ENCODE measurements at regions of chr5 and their contacts with region 1.

Region 1: GRCh38 chr5:121819682-121820261 is 31.9 kb upstream of the FTMT start:
- DNase-seq: no peak
- ATAC-seq: peak in 3 of 4 donors; percentile 7 to 24 (median 15)
- H3K4me3 ChIP-seq: no peak overlapping the region
- H3K27ac ChIP-seq: no peak overlapping the region
- H3K4me1 ChIP-seq: peaks cover 0 to 5% (median 0%) of the 10 kb centered on the region in 12 donors
- H3K27me3 ChIP-seq: no peaks in the 10 kb centered on the region
- CTCF ChIP-seq: no peak
- POLR2A ChIP-seq: no peak

Region 2: DNA sequence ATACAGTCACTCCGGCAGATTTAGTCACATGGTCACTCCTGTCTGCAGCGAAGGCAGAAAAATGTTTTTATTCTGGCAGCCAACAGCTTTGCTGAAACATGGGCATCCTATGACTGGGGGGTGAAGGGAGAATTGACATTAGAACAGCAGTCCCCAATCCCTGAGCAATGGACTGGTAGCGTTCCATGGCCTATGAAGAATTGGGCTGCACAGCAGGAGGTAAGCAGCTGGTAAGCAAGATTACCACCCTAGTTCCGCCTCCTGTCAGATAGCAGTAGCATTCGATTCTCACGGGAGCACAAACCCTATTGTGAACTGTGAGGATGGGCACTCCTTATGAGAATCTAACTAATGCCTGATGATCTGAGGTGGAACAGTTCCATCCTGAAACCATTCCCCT is 61.2 kb before region 1 on chr5:
- intact Hi-C with region 1: no loop called
- DNase-seq: no peak
- ATAC-seq: no peak
- H3K4me3 ChIP-seq: no peak overlapping the region
- H3K27ac ChIP-seq: no peak overlapping the region
- H3K4me1 ChIP-seq: no peaks in the 10 kb centered on the region
- H3K27me3 ChIP-seq: no peaks in the 10 kb centered on the region
- CTCF ChIP-seq: no peak
- POLR2A ChIP-seq: no peak

Region 3: DNA sequence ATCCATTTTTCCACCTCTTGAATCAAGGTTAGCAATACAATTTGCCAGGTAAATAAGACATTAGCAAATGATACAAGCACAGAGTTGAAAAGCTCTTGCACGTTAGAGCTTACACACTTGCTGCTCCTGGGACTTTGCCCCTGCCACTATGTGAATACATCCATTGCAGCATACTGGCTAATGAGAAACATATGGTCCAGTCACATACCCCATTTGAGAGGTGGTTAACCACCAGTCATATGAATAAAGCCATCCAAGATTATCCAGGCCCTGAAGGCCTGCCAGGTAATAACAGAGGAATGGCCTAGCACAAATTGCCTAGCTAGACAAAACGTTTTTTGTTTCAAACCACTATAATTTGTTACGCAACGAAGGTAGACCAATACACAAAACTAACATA is 13.9 kb before region 1 on chr5:
- intact Hi-C with region 1: loop called in 1 of 10 experiments (anchors 2 kb)
- DNase-seq: no peak
- ATAC-seq: no peak
- H3K4me3 ChIP-seq: no peak overlapping the region
- H3K27ac ChIP-seq: no peak overlapping the region
- H3K4me1 ChIP-seq: no peaks in the 10 kb centered on the region
- H3K27me3 ChIP-seq: no peaks in the 10 kb centered on the region
- CTCF ChIP-seq: no peak
- POLR2A ChIP-seq: no peak

Region 4: GRCh38 chr5:121834021-121834420 is 14.2 kb after region 1 on chr5:
- intact Hi-C with region 1: no loop called
- DNase-seq: no peak
- ATAC-seq: no peak
- H3K4me3 ChIP-seq: no peak overlapping the region
- H3K27ac ChIP-seq: no peak overlapping the region
- H3K4me1 ChIP-seq: no peaks in the 10 kb centered on the region
- H3K27me3 ChIP-seq: no peaks in the 10 kb centered on the region
- CTCF ChIP-seq: no peak
- POLR2A ChIP-seq: no peak

Measured in heart left ventricle (tissue), 16 donors.